Right ventricle myocardium inferior (tissue), 1 donor: ENCODE measurements at regions of chr11 and their contacts with region 1.

Region 1: DNA sequence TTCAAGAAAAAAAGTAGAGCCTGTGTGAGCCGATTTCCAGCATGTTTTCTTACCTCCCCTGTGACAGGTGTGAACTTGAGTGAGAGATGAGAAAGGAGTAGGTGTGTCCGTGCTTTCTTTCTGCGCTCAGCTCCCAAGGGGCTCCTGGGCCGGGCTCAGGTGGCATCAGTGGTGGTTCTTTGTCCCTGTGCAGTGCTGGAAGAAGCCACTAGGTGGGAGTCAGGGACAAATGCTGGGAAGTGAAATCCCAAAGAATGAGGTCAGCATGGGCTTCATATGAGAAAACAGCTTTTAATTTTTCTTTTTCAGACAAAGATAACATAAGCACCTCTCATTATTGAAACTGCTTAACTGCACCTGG is 57.8 kb downstream of the PPFIBP2 start:
- DNase-seq: no peak
- ATAC-seq: peak; percentile 69

Region 2: GRCh38 chr11:7513234-7514098 is 58.2 kb before region 1 on chr11 and contains the start of gene PPFIBP2:
- intact Hi-C with region 1: loop called (anchors 5 kb)
- DNase-seq: peak; percentile 93
- ATAC-seq: peak; percentile 93
- total RNA-seq, gene PPFIBP2: 21.4 TPM

Region 3: GRCh38 chr11:7688238-7688826 is 116.7 kb after region 1 on chr11:
- intact Hi-C with region 1: loop called (anchors 10 kb)
- DNase-seq: no peak
- ATAC-seq: no peak